Activated CD4-positive, alpha-beta T cell treated with anti-CD3 and anti-CD28 coated beads for 36 hours (primary cell): ENCODE measurements at regions of chr10 and their contacts with region 1.

Region 1: DNA sequence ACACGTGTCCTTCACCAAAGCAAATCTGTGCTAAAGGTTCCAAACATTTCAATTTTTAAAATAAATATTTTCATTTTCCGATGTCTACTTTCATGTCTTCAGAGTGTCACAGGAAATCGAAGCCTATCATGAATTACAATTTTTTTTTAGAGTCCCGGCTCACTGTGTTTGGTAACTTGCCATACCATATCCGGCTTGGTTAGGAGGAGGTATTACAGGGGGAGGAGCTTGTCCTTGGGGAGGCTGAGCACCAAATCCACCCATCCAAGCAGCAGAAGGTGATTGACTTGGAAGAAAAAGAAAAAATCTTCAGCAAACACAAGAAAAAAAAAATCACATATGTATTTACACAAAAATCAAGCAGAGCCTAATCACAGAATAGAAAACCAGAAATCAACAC is 21.3 kb downstream of the TIAL1 start:
- DNase-seq: peak; percentile 37
- ATAC-seq: peak; percentile 91
- H3K4me3 Mint-ChIP-seq: no peak overlapping the region
- H3K27ac Mint-ChIP-seq: peak overlapping the region; percentile 24
- H3K4me1 Mint-ChIP-seq: peaks cover 29% of the 10 kb centered on the region
- H3K27me3 Mint-ChIP-seq: no peaks in the 10 kb centered on the region

Region 2: DNA sequence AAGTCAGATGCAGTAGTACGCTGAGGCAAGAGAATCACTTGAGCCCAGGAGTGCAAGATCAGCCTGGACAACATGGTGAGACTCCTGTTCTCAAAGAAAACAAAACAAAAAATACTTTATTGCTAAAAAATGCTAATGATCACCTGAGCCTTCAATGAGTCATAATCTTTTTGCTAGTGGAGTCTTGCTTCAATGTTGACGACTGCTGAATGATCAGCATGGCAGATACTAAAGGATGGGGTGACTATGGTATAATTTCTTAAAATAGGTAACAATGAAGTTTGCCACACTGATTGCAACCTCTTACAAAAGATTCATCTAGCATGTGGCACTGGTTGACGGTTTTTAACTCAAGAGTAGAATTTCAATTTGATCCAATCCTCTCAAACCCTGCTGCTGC is 523.7 kb before region 1 on chr10:
- CTCF ChIA-PET with region 1: no interaction called
- POLR2A ChIA-PET with region 1: no interaction called
- intact Hi-C with region 1: loop called in 1 of 2 experiments (anchors 5 kb)
- DNase-seq: no peak
- ATAC-seq: no peak
- H3K4me3 Mint-ChIP-seq: no peak overlapping the region
- H3K27ac Mint-ChIP-seq: no peak overlapping the region
- H3K4me1 Mint-ChIP-seq: peaks cover 4% of the 10 kb centered on the region
- H3K27me3 Mint-ChIP-seq: no peaks in the 10 kb centered on the region

Region 3: DNA sequence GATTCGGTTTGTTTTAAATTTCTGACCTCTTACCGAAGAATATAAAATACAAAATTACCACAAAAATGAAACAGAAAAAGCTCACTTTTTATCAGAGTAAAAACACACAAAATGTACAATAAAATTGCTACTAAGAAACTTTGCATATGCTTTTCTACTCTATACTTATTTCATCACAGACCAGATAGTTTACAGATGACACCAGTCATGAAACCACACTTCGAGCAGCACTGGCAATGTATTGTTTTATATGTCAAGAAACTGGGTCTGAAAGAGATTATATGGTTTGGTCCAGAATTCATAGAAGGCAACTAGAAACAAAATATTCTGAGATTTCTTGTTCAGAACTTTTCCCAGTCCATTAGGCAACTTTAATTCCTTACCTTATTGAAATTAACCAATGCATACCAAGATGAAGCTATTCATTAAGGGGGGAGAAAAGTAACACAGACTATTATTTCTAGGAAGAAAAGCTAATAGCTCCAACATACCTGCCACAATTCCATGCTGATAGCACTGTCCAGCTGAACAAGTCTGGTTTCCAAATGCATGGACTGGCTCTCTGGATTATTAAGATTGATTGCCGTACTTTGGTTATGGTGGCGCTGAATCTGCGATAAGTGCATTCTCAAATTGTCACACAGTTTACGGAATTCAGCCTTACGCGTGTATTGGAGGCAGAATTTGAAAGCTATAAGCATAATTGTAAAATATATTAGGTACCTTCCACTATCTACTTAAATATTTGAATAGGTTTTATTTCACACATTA is 504.9 kb before region 1 on chr10:
- CTCF ChIA-PET with region 1: no interaction called
- POLR2A ChIA-PET with region 1: no interaction called
- intact Hi-C with region 1: loop called in 1 of 2 experiments (anchors 5 kb)
- DNase-seq: no peak
- ATAC-seq: no peak
- H3K4me3 Mint-ChIP-seq: no peak overlapping the region
- H3K27ac Mint-ChIP-seq: no peak overlapping the region
- H3K4me1 Mint-ChIP-seq: peaks cover 27% of the 10 kb centered on the region
- H3K27me3 Mint-ChIP-seq: no peaks in the 10 kb centered on the region

Region 4: GRCh38 chr10:119634219-119634544 is 58.7 kb after region 1 on chr10:
- CTCF ChIA-PET with region 1: no interaction called
- POLR2A ChIA-PET with region 1: no interaction called
- intact Hi-C with region 1: no loop called
- DNase-seq: no peak
- ATAC-seq: no peak
- H3K4me3 Mint-ChIP-seq: no peak overlapping the region
- H3K27ac Mint-ChIP-seq: no peak overlapping the region
- H3K4me1 Mint-ChIP-seq: no peaks in the 10 kb centered on the region
- H3K27me3 Mint-ChIP-seq: no peaks in the 10 kb centered on the region